Dendritic cell treated with granulocyte-macrophage colony-stimulating factor and Interleukin-4, amounts not matched to agents 40 ng/mL and 50 ng/mL, for 4 days (primary cell): ENCODE measurements at regions of chr19 and their contacts with region 1.

Region 1: DNA sequence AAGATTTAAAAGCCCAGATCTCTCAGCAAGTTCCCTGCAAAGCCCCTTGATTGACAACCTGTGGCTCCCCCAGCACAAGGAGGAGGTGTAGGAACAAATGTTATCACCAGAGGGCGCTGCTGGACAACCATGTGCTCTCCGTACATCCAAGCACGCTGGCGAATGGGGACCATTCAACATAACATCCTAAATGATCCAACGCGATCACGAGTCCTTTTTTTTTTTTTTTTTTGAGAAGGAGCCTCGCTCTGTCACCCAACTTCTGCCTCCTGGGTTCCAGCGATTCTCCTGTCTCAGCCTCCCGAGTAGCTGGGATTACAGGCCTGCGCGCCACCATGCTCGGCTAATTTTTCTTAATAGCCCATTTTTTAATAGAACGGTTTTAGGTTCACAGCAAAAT is 52.0 kb downstream of the NWD1 start:
- H3K4me3 Mint-ChIP-seq: no peak overlapping the region
- H3K27ac Mint-ChIP-seq: no peak overlapping the region
- H3K4me1 Mint-ChIP-seq: peaks cover 10% of the 10 kb centered on the region
- H3K27me3 Mint-ChIP-seq: peaks cover 32% of the 10 kb centered on the region

Region 2: GRCh38 chr19:16721051-16721450 is 50.6 kb before region 1 on chr19:
- intact Hi-C with region 1: no loop called
- H3K4me3 Mint-ChIP-seq: no peak overlapping the region
- H3K27ac Mint-ChIP-seq: no peak overlapping the region
- H3K4me1 Mint-ChIP-seq: peaks cover 7% of the 10 kb centered on the region
- H3K27me3 Mint-ChIP-seq: peaks cover 18% of the 10 kb centered on the region

Region 3: GRCh38 chr19:16836115-16837034 is 64.8 kb after region 1 on chr19:
- intact Hi-C with region 1: loop called (anchors 10 kb)
- H3K4me3 Mint-ChIP-seq: no peak overlapping the region
- H3K27ac Mint-ChIP-seq: peak overlapping the region; percentile 7
- H3K4me1 Mint-ChIP-seq: peaks cover 47% of the 10 kb centered on the region
- H3K27me3 Mint-ChIP-seq: no peaks in the 10 kb centered on the region

Region 4: DNA sequence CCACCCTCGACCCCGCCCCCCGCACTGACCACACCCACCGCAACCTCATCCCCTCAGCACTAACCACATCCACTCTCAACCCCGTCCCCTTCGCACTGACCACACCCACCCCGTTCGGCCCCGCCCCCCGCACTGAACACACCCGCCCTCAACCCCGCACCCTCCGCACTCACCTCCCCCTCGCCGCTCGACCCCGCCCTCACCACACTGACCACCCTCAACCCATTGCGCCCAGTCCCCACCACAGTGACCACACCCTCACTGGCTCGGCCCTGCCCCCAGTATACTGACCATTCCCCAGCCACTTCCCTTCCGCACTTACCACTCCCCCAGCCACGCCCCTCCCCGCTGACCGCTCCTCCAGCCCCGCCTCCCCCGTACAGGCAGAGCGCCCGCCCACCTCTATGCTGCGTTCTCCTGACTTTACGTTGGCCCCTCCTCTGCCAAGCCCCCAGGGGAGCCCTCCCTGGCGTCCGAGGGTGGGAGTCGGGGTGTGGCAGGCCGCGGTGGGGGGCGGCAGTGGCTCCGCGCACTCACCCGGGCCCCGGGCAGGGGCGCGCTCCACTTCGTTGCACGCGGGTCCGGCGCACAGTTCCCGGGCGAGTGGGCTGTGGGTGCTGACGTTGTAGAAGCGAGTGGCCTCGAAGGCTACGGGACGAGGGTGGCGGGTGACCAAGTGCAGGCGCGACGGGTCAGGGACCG is 125.7 kb after region 1 on chr19:
- intact Hi-C with region 1: loop called (anchors 2 kb)
- H3K4me3 Mint-ChIP-seq: peak overlapping the region; percentile 68
- H3K27ac Mint-ChIP-seq: peak overlapping the region; percentile 78
- H3K4me1 Mint-ChIP-seq: peaks cover 64% of the 10 kb centered on the region
- H3K27me3 Mint-ChIP-seq: peaks cover 46% of the 10 kb centered on the region

Region 5: DNA sequence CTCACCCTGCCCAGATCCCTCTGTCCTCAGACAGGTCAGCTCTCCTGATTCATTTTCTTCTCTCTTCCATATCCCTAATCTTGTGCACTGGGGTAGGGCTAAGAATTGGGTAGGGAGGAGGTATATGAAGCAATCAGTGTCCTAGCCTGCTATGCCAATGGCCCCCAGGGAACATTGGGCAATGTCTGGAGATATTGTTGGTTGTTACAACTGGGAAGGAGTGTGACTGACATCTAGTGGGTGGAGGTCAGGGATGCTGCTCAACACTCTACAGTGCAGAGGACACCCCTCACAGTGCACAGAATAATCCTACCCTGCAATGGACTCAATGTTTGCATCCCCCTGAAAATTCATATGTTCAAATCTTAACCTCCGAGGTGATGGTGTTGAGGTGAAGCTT is 197.5 kb after region 1 on chr19:
- intact Hi-C with region 1: loop called (anchors 1 kb)
- H3K4me3 Mint-ChIP-seq: no peak overlapping the region
- H3K27ac Mint-ChIP-seq: no peak overlapping the region
- H3K4me1 Mint-ChIP-seq: no peaks in the 10 kb centered on the region
- H3K27me3 Mint-ChIP-seq: peaks cover 16% of the 10 kb centered on the region

Region 6: GRCh38 chr19:17052439-17053210 is 281.0 kb after region 1 on chr19:
- intact Hi-C with region 1: loop called (anchors 1 kb)
- H3K4me3 Mint-ChIP-seq: no peak overlapping the region
- H3K27ac Mint-ChIP-seq: no peak overlapping the region
- H3K4me1 Mint-ChIP-seq: no peaks in the 10 kb centered on the region
- H3K27me3 Mint-ChIP-seq: no peaks in the 10 kb centered on the region